CD8-positive, alpha-beta memory T cell (primary cell): ENCODE measurements at regions of chr12 and their contacts with region 1.

Region 1: DNA sequence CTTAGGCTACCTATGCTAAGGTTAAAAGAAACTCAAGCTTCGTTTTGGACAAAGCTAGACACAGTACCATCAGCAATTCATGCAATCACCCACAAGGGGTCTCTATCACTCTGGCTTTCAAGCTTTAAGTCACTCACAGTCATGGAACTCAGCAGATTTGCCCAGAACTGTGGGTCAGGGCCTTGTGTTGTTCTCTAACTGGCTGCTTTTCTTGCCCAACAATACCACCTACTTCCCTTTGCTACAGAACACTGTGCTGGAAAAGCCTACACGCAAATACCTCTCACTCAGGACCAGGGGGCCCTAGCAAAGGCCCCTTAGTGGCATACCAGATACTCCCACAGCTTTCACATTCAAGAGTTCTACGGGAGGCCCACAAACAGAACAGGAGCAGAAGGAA is 9.1 kb downstream of the NEMP1 start:
- DNase-seq: peak; percentile 33 to 75 (median 63)
- H3K4me3 ChIP-seq: no peak overlapping the region
- H3K4me3 Mint-ChIP-seq: peak overlapping the region in 2 of 7 donors; percentile 1 to 21
- H3K27ac ChIP-seq: no peak overlapping the region
- H3K27ac Mint-ChIP-seq: peak overlapping the region; percentile 64 to 97 (median 75)
- H3K4me1 ChIP-seq: peaks cover 19% of the 10 kb centered on the region
- H3K4me1 Mint-ChIP-seq: peaks cover 10 to 28% (median 20%) of the 10 kb centered on the region in 3 donors
- H3K27me3 ChIP-seq: no peaks in the 10 kb centered on the region
- H3K27me3 Mint-ChIP-seq: no peaks in the 10 kb centered on the region

Region 2: GRCh38 chr12:57088459-57089248 is 19.1 kb after region 1 on chr12 and contains the start of gene NAB2:
- CTCF ChIA-PET with region 1: interaction called, 44 read pairs
- POLR2A ChIA-PET with region 1: interaction called, 4 read pairs
- DNase-seq: peak; percentile 90 to 96 (median 93)
- H3K4me3 ChIP-seq: peak within 1 kb of the TSS; percentile 92
- H3K4me3 Mint-ChIP-seq: peak within 1 kb of the TSS; percentile 92 to 98 (median 94)
- H3K27ac ChIP-seq: peak within 1 kb of the TSS; percentile 93
- H3K27ac Mint-ChIP-seq: peak within 1 kb of the TSS; percentile 91 to 100 (median 99)
- H3K4me1 ChIP-seq: peaks cover 35% of the 10 kb centered on the region
- H3K4me1 Mint-ChIP-seq: peaks cover 44 to 61% (median 52%) of the 10 kb centered on the region in 3 donors
- H3K27me3 ChIP-seq: no peaks in the 10 kb centered on the region
- H3K27me3 Mint-ChIP-seq: no peaks in the 10 kb centered on the region
- total RNA-seq, gene NAB2: 37.7 to 40.1 TPM

Region 3: DNA sequence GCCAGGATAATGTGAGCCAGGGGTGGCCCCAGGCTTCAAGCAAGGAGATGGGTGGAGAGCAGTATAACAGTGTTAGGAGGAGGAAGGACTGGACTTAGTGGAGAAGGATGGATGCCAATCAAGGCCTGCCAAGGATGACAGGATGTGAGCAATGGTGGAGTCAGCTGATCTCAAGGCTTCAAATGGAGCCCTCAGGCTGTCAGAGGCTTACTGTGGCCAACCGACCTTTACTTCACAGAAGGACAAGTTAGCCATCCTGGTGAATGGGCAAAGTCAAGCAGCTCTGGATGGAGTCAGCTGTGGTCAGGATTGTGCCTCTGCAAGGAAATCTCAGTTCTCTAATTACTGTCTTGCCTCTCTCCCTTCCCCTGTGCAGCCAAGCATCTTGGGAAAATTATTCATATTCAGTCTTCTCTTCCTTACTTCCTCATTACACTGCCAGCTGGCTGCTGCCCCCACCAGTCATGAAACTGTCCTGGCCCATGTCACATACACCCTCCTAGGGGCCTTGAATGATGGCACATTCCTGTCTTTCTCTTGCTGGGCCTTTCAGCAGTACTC is 49.3 kb after region 1 on chr12:
- CTCF ChIA-PET with region 1: interaction called, 183 read pairs
- POLR2A ChIA-PET with region 1: interaction called, 4 read pairs
- DNase-seq: peak in 1 of 5 donors; percentile 9
- H3K4me3 ChIP-seq: no peak overlapping the region
- H3K4me3 Mint-ChIP-seq: no peak overlapping the region
- H3K27ac ChIP-seq: no peak overlapping the region
- H3K27ac Mint-ChIP-seq: peak overlapping the region in 3 of 8 donors; percentile 20 to 62 (median 52)
- H3K4me1 ChIP-seq: no peaks in the 10 kb centered on the region
- H3K4me1 Mint-ChIP-seq: no peaks in the 10 kb centered on the region
- H3K27me3 ChIP-seq: no peaks in the 10 kb centered on the region
- H3K27me3 Mint-ChIP-seq: peaks cover 0 to 2% of the 10 kb centered on the region in 2 donors

Region 4: GRCh38 chr12:57124259-57124877 is 54.8 kb after region 1 on chr12:
- CTCF ChIA-PET with region 1: interaction called, 23 read pairs
- POLR2A ChIA-PET with region 1: interaction called, 4 read pairs
- DNase-seq: peak; percentile 64 to 84 (median 70)
- H3K4me3 ChIP-seq: no peak overlapping the region
- H3K4me3 Mint-ChIP-seq: peak overlapping the region in 2 of 7 donors; percentile 6 to 7
- H3K27ac ChIP-seq: no peak overlapping the region
- H3K27ac Mint-ChIP-seq: peak overlapping the region in 1 of 8 donors; percentile 0
- H3K4me1 ChIP-seq: peaks cover 11% of the 10 kb centered on the region
- H3K4me1 Mint-ChIP-seq: peaks cover 5 to 11% (median 6%) of the 10 kb centered on the region in 3 donors
- H3K27me3 ChIP-seq: no peaks in the 10 kb centered on the region
- H3K27me3 Mint-ChIP-seq: peaks cover 0 to 9% of the 10 kb centered on the region in 2 donors

Region 5: GRCh38 chr12:57135527-57136326 is 66.2 kb after region 1 on chr12:
- CTCF ChIA-PET with region 1: no interaction called
- POLR2A ChIA-PET with region 1: no interaction called
- DNase-seq: peak in 1 of 5 donors; percentile 24
- H3K4me3 ChIP-seq: no peak overlapping the region
- H3K4me3 Mint-ChIP-seq: no peak overlapping the region
- H3K27ac ChIP-seq: no peak overlapping the region
- H3K27ac Mint-ChIP-seq: no peak overlapping the region
- H3K4me1 ChIP-seq: no peaks in the 10 kb centered on the region
- H3K4me1 Mint-ChIP-seq: no peaks in the 10 kb centered on the region
- H3K27me3 ChIP-seq: no peaks in the 10 kb centered on the region
- H3K27me3 Mint-ChIP-seq: peaks cover 3% of the 10 kb centered on the region in 2 donors

Region 6: DNA sequence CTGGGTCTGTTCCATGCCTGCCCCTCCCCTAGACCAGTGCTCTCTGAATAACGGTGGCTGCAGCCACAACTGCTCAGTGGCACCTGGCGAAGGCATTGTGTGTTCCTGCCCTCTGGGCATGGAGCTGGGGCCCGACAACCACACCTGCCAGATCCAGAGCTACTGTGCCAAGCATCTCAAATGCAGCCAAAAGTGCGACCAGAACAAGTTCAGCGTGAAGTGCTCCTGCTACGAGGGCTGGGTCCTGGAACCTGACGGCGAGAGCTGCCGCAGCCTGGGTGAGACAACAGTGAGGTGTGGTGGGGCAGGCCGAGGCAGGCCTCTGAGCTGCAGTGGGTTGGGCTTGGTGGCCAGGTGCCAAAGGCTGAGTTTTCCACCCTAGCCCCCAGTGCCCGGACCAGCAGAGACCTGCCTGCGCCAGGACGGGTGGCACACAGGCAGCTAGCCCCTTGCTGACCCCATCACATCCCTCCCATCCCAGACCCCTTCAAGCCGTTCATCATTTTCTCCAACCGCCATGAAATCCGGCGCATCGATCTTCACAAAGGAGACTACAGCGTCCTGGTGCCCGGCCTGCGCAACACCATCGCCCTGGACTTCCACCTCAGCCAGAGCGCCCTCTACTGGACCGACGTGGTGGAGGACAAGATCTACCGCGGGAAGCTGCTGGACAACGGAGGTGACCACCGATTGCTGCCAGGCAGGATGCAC is 106.1 kb after region 1 on chr12:
- CTCF ChIA-PET with region 1: interaction called, 11 read pairs
- POLR2A ChIA-PET with region 1: no interaction called
- DNase-seq: peak in 2 of 5 donors; percentile 12 to 19
- H3K4me3 ChIP-seq: no peak overlapping the region
- H3K4me3 Mint-ChIP-seq: no peak overlapping the region
- H3K27ac ChIP-seq: no peak overlapping the region
- H3K27ac Mint-ChIP-seq: no peak overlapping the region
- H3K4me1 ChIP-seq: no peaks in the 10 kb centered on the region
- H3K4me1 Mint-ChIP-seq: no peaks in the 10 kb centered on the region
- H3K27me3 ChIP-seq: no peaks in the 10 kb centered on the region
- H3K27me3 Mint-ChIP-seq: no peaks in the 10 kb centered on the region

Region 7: GRCh38 chr12:57487597-57488401 is 418.3 kb after region 1 on chr12 and contains the start of gene MARS1:
- CTCF ChIA-PET with region 1: no interaction called
- POLR2A ChIA-PET with region 1: no interaction called
- DNase-seq: peak; percentile 85 to 95 (median 92)
- H3K4me3 ChIP-seq: peak within 1 kb of the TSS; percentile 86
- H3K4me3 Mint-ChIP-seq: peak within 1 kb of the TSS; percentile 93 to 99 (median 97)
- H3K27ac ChIP-seq: peak within 1 kb of the TSS; percentile 71
- H3K27ac Mint-ChIP-seq: peak within 1 kb of the TSS; percentile 80 to 99 (median 96)
- H3K4me1 ChIP-seq: peaks cover 19% of the 10 kb centered on the region
- H3K4me1 Mint-ChIP-seq: peaks cover 32 to 44% (median 37%) of the 10 kb centered on the region in 3 donors
- H3K27me3 ChIP-seq: no peaks in the 10 kb centered on the region
- H3K27me3 Mint-ChIP-seq: no peaks in the 10 kb centered on the region
- total RNA-seq, gene MARS1: 386 to 398 TPM